ENCODE measurements at regions of chr22 and their contacts with region 1.

Region 1: GRCh38 chr22:38872172-38872830 is at the start of gene CBX6:
- DNase-seq: peak; percentile 94
- H3K4me3 Mint-ChIP-seq: peak within 1 kb of the TSS; percentile 89
- H3K27ac Mint-ChIP-seq: peak within 1 kb of the TSS; percentile 91
- H3K4me1 Mint-ChIP-seq: peaks cover 48% of the 10 kb centered on the region
- H3K27me3 Mint-ChIP-seq: peaks cover 5% of the 10 kb centered on the region
- total RNA-seq, gene CBX6: 56.0 to 60.5 TPM

Region 2: DNA sequence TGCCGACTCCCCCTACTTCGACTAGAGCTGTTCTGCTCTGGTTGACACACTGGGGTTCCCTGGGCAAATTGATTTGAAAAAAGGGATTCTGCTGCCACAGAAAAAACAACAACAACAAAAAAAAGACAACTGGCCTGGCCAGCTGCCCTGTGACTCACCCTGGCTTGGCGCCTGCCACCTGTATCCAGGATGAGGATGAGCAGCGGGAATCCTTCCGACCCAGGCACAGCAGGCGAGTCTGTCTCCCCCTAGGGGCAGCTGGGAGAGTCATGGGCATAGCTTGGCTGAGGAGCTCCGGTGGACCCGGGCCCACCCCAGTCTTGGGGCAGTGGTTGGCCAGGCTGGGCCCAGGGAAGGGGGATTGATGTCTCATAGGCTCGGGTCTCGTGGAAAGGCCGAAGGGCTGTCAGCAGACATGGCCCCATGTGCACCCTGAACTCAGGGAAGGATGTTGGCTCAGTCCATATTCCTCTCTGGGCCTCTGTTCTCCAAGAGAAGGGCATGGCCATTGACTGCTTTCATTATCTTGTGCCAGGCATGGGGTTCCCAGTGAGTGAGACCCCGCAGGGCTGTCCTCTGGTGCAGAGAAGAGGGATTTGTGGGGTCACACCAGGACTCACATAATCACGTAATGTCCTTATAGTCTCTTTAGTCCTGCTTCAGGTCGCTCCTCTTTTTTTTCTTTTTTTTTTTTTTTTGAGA is 106.1 kb before region 1 on chr22:
- CTCF ChIA-PET with region 1: interaction called, 12 read pairs
- POLR2A ChIA-PET with region 1: no interaction called
- DNase-seq: peak; percentile 36
- H3K4me3 Mint-ChIP-seq: no peak overlapping the region
- H3K27ac Mint-ChIP-seq: no peak overlapping the region
- H3K4me1 Mint-ChIP-seq: peaks cover 6% of the 10 kb centered on the region
- H3K27me3 Mint-ChIP-seq: no peaks in the 10 kb centered on the region

Region 3: DNA sequence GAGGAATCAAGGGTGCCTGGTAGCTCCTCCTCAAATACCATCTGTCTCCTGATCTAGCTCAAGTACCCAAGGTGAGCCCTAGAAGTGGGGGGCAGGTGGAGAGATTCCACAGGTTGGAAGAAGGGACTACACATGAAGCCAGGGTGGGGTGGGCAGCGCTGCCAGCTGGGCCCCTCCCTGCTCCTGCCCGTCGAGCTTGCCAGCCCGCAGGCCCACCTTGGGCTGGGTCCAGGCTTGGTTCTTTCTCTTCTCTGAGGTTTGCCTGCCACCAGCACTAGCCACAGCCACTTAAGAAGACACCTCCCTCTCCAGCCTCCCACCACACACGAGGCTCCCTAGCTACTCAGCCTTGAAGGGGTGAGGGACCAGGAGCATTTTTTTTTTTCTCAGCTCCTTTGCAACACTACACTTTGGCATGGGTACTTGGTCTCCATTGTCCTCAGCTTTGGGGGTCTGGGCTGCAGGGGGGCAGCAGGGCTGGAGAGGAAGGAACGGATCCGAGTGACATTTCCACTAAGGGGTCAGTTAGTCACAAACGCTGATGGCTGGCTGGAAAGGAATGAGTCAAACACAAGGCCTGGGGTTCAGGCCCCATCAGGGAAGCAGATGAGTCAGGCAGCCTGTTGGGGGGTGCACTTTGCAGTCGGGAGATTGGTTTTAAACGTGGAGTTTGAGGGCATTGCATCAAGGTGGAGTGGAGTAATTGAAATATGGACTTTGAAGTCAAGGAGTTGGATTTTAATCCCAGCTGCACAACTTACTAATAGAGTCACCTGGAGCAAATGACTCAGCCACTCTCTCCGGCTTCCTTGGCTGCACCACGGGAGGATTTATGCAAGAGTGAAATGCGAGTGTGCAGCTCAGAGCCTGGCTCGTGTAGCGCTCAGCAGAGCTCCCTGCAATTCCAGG is 21.1 kb before region 1 on chr22:
- CTCF ChIA-PET with region 1: interaction called, 34 read pairs
- POLR2A ChIA-PET with region 1: interaction called, 4 read pairs
- DNase-seq: no peak
- H3K4me3 Mint-ChIP-seq: no peak overlapping the region
- H3K27ac Mint-ChIP-seq: no peak overlapping the region
- H3K4me1 Mint-ChIP-seq: no peaks in the 10 kb centered on the region
- H3K27me3 Mint-ChIP-seq: peaks cover 20% of the 10 kb centered on the region

Region 4: DNA sequence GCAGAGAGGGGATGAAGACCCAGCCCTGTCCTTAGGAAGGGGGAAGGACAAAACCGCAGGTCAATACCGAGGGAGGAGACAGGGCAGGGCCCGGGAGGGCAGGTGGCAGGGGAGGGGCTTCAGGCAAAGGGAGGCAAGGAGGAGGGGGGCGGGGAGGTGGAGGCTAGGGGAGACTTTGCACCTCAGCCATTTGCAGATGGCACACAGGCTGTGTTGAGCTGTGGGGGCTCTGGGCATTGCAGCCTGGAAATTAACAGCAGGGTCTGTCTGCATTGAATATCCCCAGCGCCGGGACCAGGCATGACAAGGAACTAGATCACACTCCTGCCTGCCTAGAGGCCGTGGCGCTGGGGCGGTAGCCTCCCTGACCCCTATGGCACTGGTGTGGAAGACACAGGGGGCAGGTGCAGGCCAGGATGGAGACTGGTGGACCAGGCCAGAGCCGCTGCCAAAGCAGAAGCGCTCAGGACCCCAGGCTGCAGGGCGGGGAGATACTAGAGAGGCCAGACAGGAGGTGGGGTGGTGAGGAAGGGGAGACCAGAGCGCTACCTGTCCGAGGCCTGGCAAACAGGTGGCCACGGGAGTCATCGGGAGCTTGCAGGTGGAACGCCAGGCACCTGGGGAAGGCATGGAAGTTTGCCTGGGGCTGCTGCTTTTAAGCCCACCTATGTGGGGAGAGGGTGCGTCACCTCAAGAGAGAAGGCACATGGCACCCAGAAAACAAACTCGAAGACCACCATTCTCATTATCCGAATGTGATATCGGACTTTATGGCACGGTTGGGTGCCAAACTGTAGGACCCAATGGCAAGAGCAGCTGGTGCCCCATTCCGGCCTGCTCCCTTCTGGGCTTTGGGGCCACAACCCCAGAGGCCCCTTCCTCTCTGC is 11.8 kb before region 1 on chr22:
- CTCF ChIA-PET with region 1: interaction called, 34 read pairs
- POLR2A ChIA-PET with region 1: no interaction called
- DNase-seq: no peak
- H3K4me3 Mint-ChIP-seq: no peak overlapping the region
- H3K27ac Mint-ChIP-seq: no peak overlapping the region
- H3K4me1 Mint-ChIP-seq: no peaks in the 10 kb centered on the region
- H3K27me3 Mint-ChIP-seq: peaks cover 6% of the 10 kb centered on the region

Region 5: DNA sequence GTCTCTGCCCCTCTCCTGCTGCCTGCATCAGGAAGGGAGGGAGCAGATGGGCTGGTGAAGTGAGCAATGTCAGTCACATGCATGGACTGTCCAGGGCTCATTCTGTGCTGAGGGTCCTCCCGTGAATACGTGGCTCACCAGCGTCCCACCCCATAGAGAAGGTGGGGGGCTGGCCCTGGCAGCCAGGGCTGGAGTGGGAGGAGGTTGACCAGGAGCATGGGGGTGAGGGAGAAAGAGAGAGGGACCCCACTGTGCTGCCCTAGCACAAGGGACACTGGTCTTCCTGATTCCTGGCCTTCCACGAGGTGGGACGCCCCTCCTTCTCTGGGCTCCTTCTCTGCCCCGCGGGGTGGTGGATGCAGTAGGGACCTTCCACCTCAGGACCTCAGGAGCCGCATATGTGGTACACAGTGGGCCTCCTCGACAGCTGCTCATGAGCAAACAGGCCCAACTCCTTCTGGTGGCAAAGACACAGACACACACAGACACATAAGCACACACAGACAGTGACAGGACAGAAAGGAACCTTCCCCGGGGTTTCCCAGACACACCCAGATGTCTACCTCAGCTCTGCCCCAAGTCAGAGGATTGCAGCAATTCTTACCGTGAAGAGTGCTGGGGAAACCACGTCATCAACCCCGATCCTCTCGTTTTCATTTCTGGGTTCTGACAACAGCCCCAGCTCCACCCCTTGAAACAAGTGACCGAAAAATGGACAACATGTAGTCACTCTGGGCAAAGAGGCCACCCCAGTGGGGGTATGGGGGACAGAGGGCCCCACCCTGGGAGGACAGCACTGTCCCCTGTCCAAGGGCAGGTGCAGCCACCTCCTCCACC is 81.5 kb after region 1 on chr22:
- CTCF ChIA-PET with region 1: interaction called, 13 read pairs
- POLR2A ChIA-PET with region 1: no interaction called
- DNase-seq: peak; percentile 69
- H3K4me3 Mint-ChIP-seq: peak overlapping the region; percentile 25
- H3K27ac Mint-ChIP-seq: peak overlapping the region; percentile 71
- H3K4me1 Mint-ChIP-seq: peaks cover 27% of the 10 kb centered on the region
- H3K27me3 Mint-ChIP-seq: no peaks in the 10 kb centered on the region

Region 6: GRCh38 chr22:39003165-39003638 is 130.9 kb after region 1 on chr22:
- CTCF ChIA-PET with region 1: interaction called, 51 read pairs
- POLR2A ChIA-PET with region 1: no interaction called
- DNase-seq: peak; percentile 80
- H3K4me3 Mint-ChIP-seq: no peak overlapping the region
- H3K27ac Mint-ChIP-seq: peak overlapping the region; percentile 41
- H3K4me1 Mint-ChIP-seq: peaks cover 14% of the 10 kb centered on the region
- H3K27me3 Mint-ChIP-seq: peaks cover 6% of the 10 kb centered on the region

Region 7: GRCh38 chr22:39013942-39014722 is 141.8 kb after region 1 on chr22 and contains the start of gene APOBEC3C:
- CTCF ChIA-PET with region 1: interaction called, 51 read pairs
- POLR2A ChIA-PET with region 1: no interaction called
- DNase-seq: peak; percentile 89
- H3K4me3 Mint-ChIP-seq: peak within 1 kb of the TSS; percentile 98
- H3K27ac Mint-ChIP-seq: peak within 1 kb of the TSS; percentile 97
- H3K4me1 Mint-ChIP-seq: peaks cover 47% of the 10 kb centered on the region
- H3K27me3 Mint-ChIP-seq: no peaks in the 10 kb centered on the region
- total RNA-seq, gene APOBEC3C: 111 to 144 TPM